K562 (cell line): ENCODE measurements at regions of chr1 and their contacts with region 1.

Region 1: GRCh38 chr1:44819608-44820327 is 11.4 kb downstream of the BTBD19 start:
- DNase-seq: peak; percentile 90 to 97 (median 93)
- ATAC-seq: peak; percentile 96
- H3K4me3 ChIP-seq: peak overlapping the region; percentile 36
- H3K27ac ChIP-seq: peak overlapping the region; percentile 100
- H3K4me1 ChIP-seq: peaks cover 13 to 28% of the 10 kb centered on the region in 2 experiments
- H3K27me3 ChIP-seq: no peaks in the 10 kb centered on the region
- CTCF ChIP-seq: peak; percentile 26 to 49 (median 49); a peak in 4 of 6 replicates
- EP300 ChIP-seq: peak; percentile 73
- POLR2A ChIP-seq: peak; percentile 100
- RAD21 ChIP-seq: peak; percentile 41 to 53; a peak in 3 of 4 replicates

Region 2: DNA sequence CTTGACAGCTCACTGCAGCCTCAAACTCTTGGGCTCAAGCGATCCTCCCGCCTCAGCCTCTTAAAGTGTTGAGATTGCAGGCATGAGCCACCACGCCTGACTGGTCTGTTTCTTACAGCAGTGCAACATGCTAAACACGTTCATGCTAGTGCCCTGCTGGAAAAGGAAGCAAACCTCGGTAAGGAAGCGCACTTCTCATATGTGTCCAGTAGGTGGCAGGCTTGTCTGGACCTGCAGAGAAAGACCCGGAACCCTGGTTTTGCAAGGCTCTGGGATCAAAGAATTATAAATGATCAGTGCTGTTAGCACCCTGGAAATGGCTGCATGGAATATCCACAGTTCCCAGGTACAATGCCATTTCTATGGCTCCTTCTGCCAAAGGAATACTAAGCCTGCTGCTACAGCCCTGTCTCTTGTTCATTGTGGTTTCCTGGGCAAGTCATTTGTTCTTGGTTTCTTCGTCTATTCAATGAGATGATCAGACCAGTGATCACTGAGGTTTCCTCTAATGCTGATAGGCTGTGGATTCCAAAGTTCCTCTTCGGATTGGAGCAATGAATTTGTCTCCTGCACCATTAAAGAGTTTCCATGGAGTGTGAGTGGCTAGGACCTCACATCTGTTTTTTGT is 104.7 kb before region 1 on chr1:
- CTCF ChIA-PET with region 1: no interaction called
- POLR2A ChIA-PET with region 1: interaction called, 222 read pairs
- in situ Hi-C with region 1: no loop called
- intact Hi-C with region 1: no loop called
- DNase-seq: peak; percentile 85 to 88 (median 86)
- ATAC-seq: peak; percentile 90
- H3K4me3 ChIP-seq: no peak overlapping the region
- H3K27ac ChIP-seq: no peak overlapping the region
- H3K4me1 ChIP-seq: peaks cover 0 to 5% of the 10 kb centered on the region in 2 experiments; a peak in 2 of 5 replicates
- H3K27me3 ChIP-seq: peaks cover 21 to 23% of the 10 kb centered on the region in 2 experiments; a peak in 4 of 5 replicates
- CTCF ChIP-seq: peak; percentile 87 to 98 (median 94)
- EP300 ChIP-seq: no peak
- POLR2A ChIP-seq: no peak
- RAD21 ChIP-seq: peak; percentile 65 to 74

Region 3: GRCh38 chr1:44780583-44781121 is 39.1 kb before region 1 on chr1:
- CTCF ChIA-PET with region 1: no interaction called
- POLR2A ChIA-PET with region 1: interaction called, 107 read pairs
- in situ Hi-C with region 1: no loop called
- intact Hi-C with region 1: loop called (anchors 5 kb)
- DNase-seq: peak in 1 of 4 experiments; percentile 51
- ATAC-seq: peak; percentile 42
- H3K4me3 ChIP-seq: no peak overlapping the region
- H3K27ac ChIP-seq: peak overlapping the region; percentile 11; the same call in 1 of the 3 replicates
- H3K4me1 ChIP-seq: peaks cover 13 to 20% of the 10 kb centered on the region in 2 experiments
- H3K27me3 ChIP-seq: no peaks in the 10 kb centered on the region
- CTCF ChIP-seq: peak in 2 of 3 experiments; percentile 12 to 15; a peak in 1 of 6 replicates
- EP300 ChIP-seq: no peak
- POLR2A ChIP-seq: no peak; the same call in none of the 2 replicates
- RAD21 ChIP-seq: no peak

Region 4: DNA sequence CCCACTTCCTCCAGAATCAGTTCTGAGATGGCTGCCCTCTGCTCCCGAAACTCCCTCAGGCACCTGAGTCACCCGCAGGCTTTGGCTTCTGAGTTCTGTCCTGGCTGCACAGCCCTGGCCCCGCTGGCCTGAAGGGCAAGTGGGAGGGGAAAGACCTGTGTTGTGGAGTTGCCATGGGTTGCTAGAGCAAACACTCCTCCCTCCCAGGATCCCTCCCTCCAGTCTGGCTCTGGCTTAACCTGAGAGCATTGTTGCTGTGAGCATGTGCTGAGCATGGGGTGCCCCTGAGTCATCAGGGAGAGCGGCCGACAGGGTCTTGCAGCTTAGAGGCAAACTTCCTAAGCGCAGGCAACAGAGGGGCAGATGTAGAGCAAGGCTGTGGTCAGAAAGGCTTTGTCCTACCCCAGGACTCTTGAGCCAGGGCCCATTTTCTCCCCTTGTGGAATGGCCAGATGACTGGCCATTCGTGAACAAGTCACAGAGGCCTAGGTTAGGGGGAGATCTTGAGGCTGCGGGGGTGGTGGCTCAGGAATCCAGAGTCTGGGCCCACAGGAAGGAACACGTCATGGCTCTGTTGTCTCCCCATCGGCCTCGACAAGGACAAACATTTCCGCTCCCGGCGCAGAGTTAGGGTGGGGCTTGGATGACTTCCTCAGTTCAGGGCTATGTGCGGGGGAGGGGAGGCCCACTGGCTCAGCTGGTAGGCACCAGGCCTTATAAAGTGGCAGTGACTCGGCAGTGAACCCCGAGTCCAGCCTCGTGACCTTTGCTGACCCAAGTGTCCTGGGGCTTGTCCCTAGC is 12.3 kb before region 1 on chr1 and contains the start of gene DYNLT4:
- CTCF ChIA-PET with region 1: no interaction called
- POLR2A ChIA-PET with region 1: interaction called, 594 read pairs
- in situ Hi-C with region 1: no loop called
- intact Hi-C with region 1: loop called (anchors 1 kb)
- DNase-seq: peak; percentile 86 to 99 (median 90)
- ATAC-seq: peak; percentile 84
- H3K4me3 ChIP-seq: peak within 1 kb of the TSS; percentile 30; the same call in 1 of the 2 replicates
- H3K27ac ChIP-seq: peak within 1 kb of the TSS; percentile 100
- H3K4me1 ChIP-seq: peaks cover 59 to 72% of the 10 kb centered on the region in 2 experiments
- H3K27me3 ChIP-seq: no peaks in the 10 kb centered on the region
- CTCF ChIP-seq: peak in 1 of 3 experiments; percentile 0; a peak in 1 of 6 replicates
- EP300 ChIP-seq: peak; percentile 71; the same call in 1 of the 2 replicates
- POLR2A ChIP-seq: peak; percentile 88
- RAD21 ChIP-seq: peak; percentile 9 to 20; a peak in 3 of 4 replicates
- polyA plus RNA-seq, gene DYNLT4: not detected

Region 5: GRCh38 chr1:44855742-44856141 is 36.0 kb after region 1 on chr1:
- CTCF ChIA-PET with region 1: no interaction called
- POLR2A ChIA-PET with region 1: interaction called, 16 read pairs
- in situ Hi-C with region 1: no loop called
- intact Hi-C with region 1: no loop called
- DNase-seq: no peak
- ATAC-seq: no peak
- H3K4me3 ChIP-seq: no peak overlapping the region
- H3K27ac ChIP-seq: no peak overlapping the region
- H3K4me1 ChIP-seq: no peaks in the 10 kb centered on the region
- H3K27me3 ChIP-seq: no peaks in the 10 kb centered on the region
- CTCF ChIP-seq: no peak
- EP300 ChIP-seq: no peak
- POLR2A ChIP-seq: no peak
- RAD21 ChIP-seq: no peak

Region 6: DNA sequence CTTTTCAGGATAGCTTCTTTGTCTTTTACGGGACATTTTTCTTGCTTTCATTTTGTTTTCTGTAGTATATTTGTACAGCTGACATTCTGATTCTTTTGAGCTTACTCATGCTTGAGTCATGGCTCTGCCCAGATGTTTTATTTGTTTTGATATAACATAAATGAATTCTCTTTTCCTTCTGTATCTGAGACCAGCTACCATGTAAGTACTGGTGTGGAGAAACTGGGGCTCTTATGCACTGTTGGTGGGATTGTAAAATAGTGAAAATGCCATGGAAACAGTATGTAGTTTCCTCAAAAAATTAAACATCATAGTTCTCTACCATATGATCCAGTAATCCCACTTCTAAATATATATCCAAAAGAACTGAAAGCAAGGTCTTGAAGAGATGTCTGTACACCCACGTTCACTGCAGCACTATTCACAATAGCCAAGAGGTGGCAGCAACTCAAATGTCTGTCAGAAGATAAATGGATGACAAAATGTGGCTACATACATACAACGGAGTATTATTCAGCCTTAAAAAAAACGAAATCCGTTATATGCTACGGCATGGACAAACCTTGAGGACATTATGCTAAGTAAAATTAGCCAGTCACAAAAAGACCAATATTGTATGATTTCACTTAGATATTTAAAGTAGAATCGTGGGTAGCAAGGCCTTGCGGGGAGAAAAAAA is 105.2 kb after region 1 on chr1:
- CTCF ChIA-PET with region 1: no interaction called
- POLR2A ChIA-PET with region 1: no interaction called
- in situ Hi-C with region 1: no loop called
- intact Hi-C with region 1: no loop called
- DNase-seq: peak in 1 of 4 experiments; percentile 41
- ATAC-seq: peak; percentile 86
- H3K4me3 ChIP-seq: no peak overlapping the region
- H3K27ac ChIP-seq: no peak overlapping the region
- H3K4me1 ChIP-seq: no peaks in the 10 kb centered on the region
- H3K27me3 ChIP-seq: no peaks in the 10 kb centered on the region
- CTCF ChIP-seq: peak; percentile 29 to 66 (median 62); a peak in 4 of 6 replicates
- EP300 ChIP-seq: no peak
- POLR2A ChIP-seq: no peak
- RAD21 ChIP-seq: peak in 1 of 2 experiments; percentile 51; a peak in 3 of 4 replicates

Region 7: DNA sequence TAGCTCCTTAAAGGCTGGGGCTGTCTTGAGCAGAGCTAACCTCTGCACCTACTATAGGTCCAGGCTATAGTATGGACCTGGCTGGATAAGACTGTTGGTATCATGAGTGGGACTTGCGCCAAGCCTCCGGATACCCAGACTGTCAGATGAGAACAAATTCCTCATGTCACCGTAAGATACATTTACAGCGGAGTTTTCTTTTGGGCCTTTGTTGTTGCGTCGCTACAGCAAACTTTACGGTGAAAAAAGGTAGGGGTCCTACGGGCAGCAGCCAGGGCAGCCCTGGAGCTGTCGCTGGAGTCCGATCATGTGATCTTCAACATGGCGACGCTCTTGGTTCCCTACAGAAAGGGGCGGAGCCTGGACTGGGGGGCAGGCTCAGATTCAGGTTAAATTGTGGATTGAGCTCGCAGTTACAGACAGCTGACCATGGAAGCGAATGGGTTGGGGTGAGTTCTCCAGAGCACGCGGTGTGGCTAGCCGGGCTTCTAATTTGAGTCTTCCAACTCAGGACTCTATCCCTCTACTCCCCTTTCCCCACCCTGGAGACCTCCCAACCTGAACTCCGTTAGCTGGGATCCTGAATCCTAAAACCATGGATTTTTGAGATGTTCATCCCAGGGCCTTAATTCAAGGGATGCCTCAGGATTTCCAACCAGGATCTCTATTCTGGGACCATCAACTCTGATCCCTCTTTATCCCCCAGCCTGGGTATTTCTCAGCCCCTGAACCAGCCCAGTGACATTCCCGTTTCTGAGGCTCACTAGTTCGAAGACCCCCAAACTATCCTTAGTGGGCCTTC is 192.3 kb after region 1 on chr1 and contains the start of gene UROD:
- CTCF ChIA-PET with region 1: no interaction called
- POLR2A ChIA-PET with region 1: interaction called, 83 read pairs
- in situ Hi-C with region 1: no loop called
- intact Hi-C with region 1: no loop called
- DNase-seq: peak; percentile 95 to 100 (median 96)
- ATAC-seq: peak; percentile 73
- H3K4me3 ChIP-seq: peak within 1 kb of the TSS; percentile 86
- H3K27ac ChIP-seq: peak within 1 kb of the TSS; percentile 85
- H3K4me1 ChIP-seq: peaks cover 44 to 45% of the 10 kb centered on the region in 2 experiments
- H3K27me3 ChIP-seq: no peaks in the 10 kb centered on the region
- CTCF ChIP-seq: no peak
- EP300 ChIP-seq: peak; percentile 72; the same call in 1 of the 2 replicates
- POLR2A ChIP-seq: peak; percentile 98
- RAD21 ChIP-seq: peak in 1 of 2 experiments; percentile 5; a peak in 1 of 4 replicates
- polyA plus RNA-seq, gene UROD: 2,545 to 2,933 TPM

Region 8: DNA sequence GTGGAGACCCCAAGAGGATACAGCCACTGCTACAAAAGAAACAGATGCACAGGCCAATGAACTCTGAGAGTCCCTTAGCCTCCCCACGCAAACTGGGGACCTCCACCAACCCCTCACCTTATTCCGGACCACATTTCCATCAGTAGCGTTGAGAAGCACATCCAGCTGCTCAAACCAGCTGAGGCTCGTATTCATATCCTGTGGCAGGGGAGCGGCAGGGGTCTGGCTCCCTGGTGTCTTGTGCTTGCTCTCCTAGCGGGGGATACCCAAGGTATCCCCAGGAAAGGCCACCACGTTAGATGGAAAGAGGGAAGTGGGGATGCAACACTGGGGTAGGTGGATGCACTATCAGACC is 679.6 kb after region 1 on chr1:
- CTCF ChIA-PET with region 1: no interaction called
- POLR2A ChIA-PET with region 1: interaction called, 14 read pairs
- in situ Hi-C with region 1: no loop called
- intact Hi-C with region 1: no loop called
- DNase-seq: peak in 1 of 4 experiments; percentile 55
- ATAC-seq: peak; percentile 3
- H3K4me3 ChIP-seq: peak overlapping the region; percentile 44
- H3K27ac ChIP-seq: peak overlapping the region; percentile 56; the same call in 2 of the 3 replicates
- H3K4me1 ChIP-seq: peaks cover 18 to 19% of the 10 kb centered on the region in 2 experiments; a peak in 4 of 5 replicates
- H3K27me3 ChIP-seq: no peaks in the 10 kb centered on the region
- CTCF ChIP-seq: 0 out of 6 replicates have a peak, but pooled peaks of 1 of the 3 experiments have one; percentile 7
- EP300 ChIP-seq: no peak
- POLR2A ChIP-seq: no peak
- RAD21 ChIP-seq: no peak